Activated CD8-positive, alpha-beta T cell treated with anti-CD3 and anti-CD28 coated beads for 36 hours (primary cell): ENCODE measurements at regions of chr1 and their contacts with region 1.

Region 1: DNA sequence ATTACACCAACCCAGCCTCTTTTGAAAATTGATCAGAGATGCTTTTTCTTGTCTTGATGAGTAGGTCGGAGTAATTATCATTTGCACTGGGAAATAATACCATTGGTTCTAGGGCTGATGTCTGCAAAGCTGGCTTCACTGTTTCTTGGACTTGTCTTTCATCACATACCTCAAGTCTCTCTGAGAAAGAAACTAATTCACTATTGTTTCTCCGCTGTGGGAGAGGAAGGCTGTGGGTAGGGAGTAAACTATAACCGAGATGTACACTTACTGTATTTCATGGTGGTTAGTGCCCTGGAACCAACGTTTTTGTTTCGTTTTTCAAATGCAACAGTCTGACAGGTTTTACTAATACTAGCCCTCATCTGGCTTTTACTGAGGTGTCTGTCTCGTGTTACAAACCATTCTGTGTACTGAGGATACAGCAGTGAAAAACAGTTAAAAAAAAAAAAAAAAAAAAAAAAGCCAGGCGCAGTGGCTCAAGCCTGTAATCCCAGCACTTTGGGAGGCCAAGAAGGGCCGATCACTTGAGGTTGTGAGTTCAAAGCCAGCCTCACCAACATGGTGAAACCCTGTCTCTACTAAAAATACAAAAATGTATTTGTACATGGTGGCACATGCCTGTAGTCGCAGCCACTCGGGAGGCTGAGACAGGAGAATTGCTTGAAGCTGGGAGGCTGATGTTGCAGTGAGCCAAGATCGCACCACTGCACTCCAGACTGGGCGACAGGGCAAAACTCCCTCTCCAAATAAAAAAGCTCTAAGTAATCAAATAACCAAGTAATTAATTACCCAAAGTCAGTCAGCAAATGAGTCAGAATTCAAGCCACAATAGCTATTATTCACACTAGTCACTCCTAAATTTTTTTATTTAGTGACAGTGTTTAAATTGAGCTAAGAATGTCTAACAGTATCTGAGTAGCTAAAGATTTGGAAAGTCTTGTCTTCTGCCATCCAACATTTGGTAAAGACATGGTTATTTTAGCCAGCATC is 23.3 kb downstream of the TOMM20 start:
- DNase-seq: no peak
- ATAC-seq: peak; percentile 66
- H3K4me3 Mint-ChIP-seq: peak overlapping the region; percentile 61
- H3K27ac Mint-ChIP-seq: peak overlapping the region; percentile 79
- H3K4me1 Mint-ChIP-seq: peaks cover 42% of the 10 kb centered on the region
- H3K27me3 Mint-ChIP-seq: peaks cover 3% of the 10 kb centered on the region
- CTCF ChIP-seq: no peak

Region 2: GRCh38 chr1:234893725-234894630 is 211.4 kb before region 1 on chr1:
- CTCF ChIA-PET with region 1: no interaction called
- POLR2A ChIA-PET with region 1: no interaction called
- intact Hi-C with region 1: no loop called
- DNase-seq: peak; percentile 78
- ATAC-seq: peak; percentile 84
- H3K4me3 Mint-ChIP-seq: no peak overlapping the region
- H3K27ac Mint-ChIP-seq: peak overlapping the region; percentile 31
- H3K4me1 Mint-ChIP-seq: peaks cover 34% of the 10 kb centered on the region
- H3K27me3 Mint-ChIP-seq: no peaks in the 10 kb centered on the region
- CTCF ChIP-seq: no peak

Region 3: DNA sequence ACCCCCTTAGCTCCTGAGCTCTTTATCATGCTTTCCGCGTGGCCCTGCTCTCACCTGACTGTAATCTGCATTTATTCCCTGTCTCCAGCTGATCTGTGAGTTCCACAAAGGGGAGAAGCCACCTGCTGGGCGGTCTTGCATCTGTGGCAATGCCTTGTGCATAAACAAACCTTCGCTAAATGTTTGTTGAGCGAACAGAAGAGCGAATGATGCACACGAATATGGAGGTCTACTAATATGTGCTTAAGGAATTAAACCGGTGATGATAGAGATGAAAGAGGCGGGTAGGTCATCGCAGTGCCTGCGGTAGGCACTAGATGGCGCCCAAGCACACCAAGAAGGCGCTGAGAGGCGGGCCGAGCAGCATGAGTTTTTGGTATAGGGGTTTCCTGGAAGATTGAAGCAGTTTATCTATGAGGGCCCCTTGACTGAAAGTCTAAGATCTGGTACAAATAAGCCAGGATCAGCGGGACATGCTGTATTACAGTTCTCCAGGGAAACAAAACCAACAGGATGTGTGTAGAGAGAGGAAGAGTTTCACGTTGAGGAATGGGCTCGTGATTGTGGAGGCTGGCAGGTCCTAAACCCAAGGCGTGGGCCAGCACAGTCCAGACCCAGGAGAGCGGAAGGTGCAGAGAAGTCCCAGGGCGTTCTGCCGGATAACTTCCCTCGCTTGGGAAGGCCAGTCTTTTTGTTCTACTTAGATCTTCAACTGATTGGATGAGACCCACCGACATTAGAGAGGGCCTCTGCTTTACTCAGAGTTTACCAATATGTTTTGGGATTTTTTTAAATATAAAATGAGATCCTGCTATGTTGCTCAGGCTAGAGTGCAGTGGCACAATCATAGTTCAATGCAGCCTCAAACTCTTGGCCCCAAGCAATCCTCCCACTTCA is 11.4 kb before region 1 on chr1:
- CTCF ChIA-PET with region 1: interaction called, 37 read pairs
- POLR2A ChIA-PET with region 1: no interaction called
- intact Hi-C with region 1: no loop called
- DNase-seq: peak; percentile 93
- ATAC-seq: peak; percentile 99
- H3K4me3 Mint-ChIP-seq: no peak overlapping the region
- H3K27ac Mint-ChIP-seq: peak overlapping the region; percentile 46
- H3K4me1 Mint-ChIP-seq: peaks cover 8% of the 10 kb centered on the region
- H3K27me3 Mint-ChIP-seq: peaks cover 6% of the 10 kb centered on the region
- CTCF ChIP-seq: peak; percentile 90

Region 4: DNA sequence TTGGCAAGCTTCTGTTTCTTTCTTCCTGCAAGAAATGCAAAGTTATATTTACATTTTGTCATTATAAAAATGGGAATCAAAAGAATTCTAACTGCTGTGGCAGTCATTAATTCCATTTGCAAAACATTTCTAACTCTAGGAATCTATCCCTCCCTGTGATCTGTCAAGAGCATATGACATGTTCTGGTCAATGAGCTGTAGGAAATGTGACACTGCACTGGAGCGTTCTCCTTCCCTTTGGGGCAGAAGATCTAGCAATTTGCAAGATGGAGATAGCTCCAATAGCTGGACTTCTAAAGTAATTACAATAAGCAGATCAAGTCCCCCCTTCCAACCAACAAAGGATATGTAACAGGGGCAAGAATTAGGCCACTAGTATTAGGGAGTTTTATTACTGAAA is 17.0 kb after region 1 on chr1:
- CTCF ChIA-PET with region 1: interaction called, 13 read pairs
- POLR2A ChIA-PET with region 1: interaction called, 12 read pairs
- intact Hi-C with region 1: no loop called
- DNase-seq: no peak
- ATAC-seq: no peak
- H3K4me3 Mint-ChIP-seq: no peak overlapping the region
- H3K27ac Mint-ChIP-seq: peak overlapping the region; percentile 34
- H3K4me1 Mint-ChIP-seq: peaks cover 43% of the 10 kb centered on the region
- H3K27me3 Mint-ChIP-seq: no peaks in the 10 kb centered on the region
- CTCF ChIP-seq: no peak